ENCODE measurements at regions of chr16 and their contacts with region 1.

Region 1: GRCh38 chr16:73172241-73172972 is 124.5 kb upstream of the ZFHX3 start:
- DNase-seq: peak; percentile 95
- ATAC-seq: peak; percentile 95

Region 2: DNA sequence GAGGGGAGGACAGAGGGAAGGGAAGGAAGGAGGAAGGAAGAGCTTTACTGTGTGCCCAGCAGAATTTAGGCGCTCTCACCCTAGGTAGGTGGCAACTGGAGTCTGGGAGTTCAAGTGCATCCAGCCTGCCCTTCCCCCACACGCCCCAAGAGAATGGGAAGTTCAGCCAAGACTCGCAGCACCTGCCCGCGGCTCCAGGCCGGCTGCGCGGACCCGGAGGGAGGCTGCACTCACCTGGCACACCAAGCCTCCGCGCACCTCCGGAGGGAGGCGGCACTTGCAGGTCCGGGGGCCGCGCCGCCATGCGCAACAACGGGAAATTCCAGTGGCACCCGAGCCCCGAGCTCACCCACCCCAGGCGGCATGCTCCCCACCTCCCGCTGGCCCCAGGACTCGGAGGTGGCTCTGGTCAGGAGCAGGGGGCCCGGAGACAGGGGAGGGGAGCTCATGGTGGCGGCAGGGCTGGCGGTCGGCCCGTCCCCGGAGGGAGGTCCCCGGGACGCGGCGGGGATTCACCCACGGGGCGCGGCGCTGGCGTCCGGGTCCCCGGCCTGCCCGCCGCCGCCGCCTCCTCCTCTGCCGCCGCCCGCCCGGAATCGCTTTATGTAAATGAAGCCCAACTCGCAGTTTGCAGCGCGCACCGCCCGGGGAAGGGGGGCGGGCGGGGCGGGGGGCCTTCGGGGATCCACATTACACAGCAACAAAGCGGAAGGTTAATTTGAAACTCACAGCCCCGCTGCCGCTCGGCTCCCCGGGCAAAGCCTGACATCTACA is 124.7 kb before region 1 on chr16 and contains the start of gene ZFHX3:
- intact Hi-C with region 1: loop called (anchors 10 kb)
- DNase-seq: peak; percentile 84
- ATAC-seq: peak; percentile 60
- total RNA-seq, gene ZFHX3: 44.6 TPM

Region 3: GRCh38 chr16:73122604-73123391 is 49.6 kb before region 1 on chr16:
- intact Hi-C with region 1: no loop called
- DNase-seq: peak; percentile 77
- ATAC-seq: peak; percentile 77

Measured in sciatic nerve (tissue), 2 donors.